ENCODE measurements at regions of chr11 and their contacts with region 1.

Region 1: GRCh38 chr11:68684385-68685356 is at the start of gene GAL:
- DNase-seq: peak; percentile 51 to 77
- H3K4me3 ChIP-seq: peak within 1 kb of the TSS; percentile 62
- H3K4me3 Mint-ChIP-seq: peak within 1 kb of the TSS; percentile 67
- H3K27ac Mint-ChIP-seq: no peak within 1 kb of the TSS
- H3K4me1 ChIP-seq: 0 out of 2 replicates have a peak, but pooled peaks cover 8% of the 10 kb centered on the region
- H3K4me1 Mint-ChIP-seq: peaks cover 7% of the 10 kb centered on the region
- H3K27me3 ChIP-seq: no peaks in the 10 kb centered on the region
- H3K27me3 Mint-ChIP-seq: no peaks in the 10 kb centered on the region
- CTCF ChIP-seq: no peak
- total RNA-seq, gene GAL: 72.6 and 94.4 TPM in 2 replicates

Region 2: GRCh38 chr11:67776852-67777520 is 907.7 kb before region 1 on chr11:
- CTCF ChIA-PET with region 1: no interaction called
- POLR2A ChIA-PET with region 1: no interaction called
- intact Hi-C with region 1: no loop called
- DNase-seq: no peak
- H3K4me3 ChIP-seq: no peak overlapping the region
- H3K4me3 Mint-ChIP-seq: no peak overlapping the region
- H3K27ac Mint-ChIP-seq: peak overlapping the region; percentile 36
- H3K4me1 ChIP-seq: peaks cover 8% of the 10 kb centered on the region
- H3K4me1 Mint-ChIP-seq: peaks cover 28% of the 10 kb centered on the region
- H3K27me3 ChIP-seq: no peaks in the 10 kb centered on the region
- H3K27me3 Mint-ChIP-seq: no peaks in the 10 kb centered on the region
- CTCF ChIP-seq: no peak

Region 3: DNA sequence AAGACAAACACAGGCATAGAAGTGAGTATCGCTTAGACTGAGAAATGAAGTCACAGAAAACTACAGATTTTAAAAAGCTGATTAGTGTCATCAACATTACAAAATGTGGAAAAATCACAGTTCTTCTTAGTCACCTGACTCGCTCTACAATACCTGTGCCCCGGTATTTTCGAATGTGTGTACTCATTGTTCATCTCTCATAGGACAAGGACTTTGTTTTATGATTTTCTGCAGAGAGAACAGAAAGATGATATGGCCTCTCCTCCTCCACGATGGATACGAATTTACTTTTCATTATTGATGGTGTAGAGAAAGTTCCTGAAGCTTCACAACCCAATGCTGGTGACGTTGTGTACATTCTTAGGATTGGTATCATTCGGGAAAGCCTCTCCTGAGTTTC is 29.7 kb before region 1 on chr11:
- CTCF ChIA-PET with region 1: no interaction called
- POLR2A ChIA-PET with region 1: interaction called, 12 read pairs
- intact Hi-C with region 1: no loop called
- DNase-seq: no peak
- H3K4me3 ChIP-seq: no peak overlapping the region
- H3K4me3 Mint-ChIP-seq: no peak overlapping the region
- H3K27ac Mint-ChIP-seq: no peak overlapping the region
- H3K4me1 ChIP-seq: no peaks in the 10 kb centered on the region
- H3K4me1 Mint-ChIP-seq: no peaks in the 10 kb centered on the region
- H3K27me3 ChIP-seq: no peaks in the 10 kb centered on the region; the same call in 1 of the 2 replicates
- H3K27me3 Mint-ChIP-seq: no peaks in the 10 kb centered on the region
- CTCF ChIP-seq: no peak

Region 4: GRCh38 chr11:68724293-68724692 is 39.6 kb after region 1 on chr11:
- CTCF ChIA-PET with region 1: no interaction called
- POLR2A ChIA-PET with region 1: no interaction called
- intact Hi-C with region 1: no loop called
- DNase-seq: no peak
- H3K4me3 ChIP-seq: no peak overlapping the region
- H3K4me3 Mint-ChIP-seq: no peak overlapping the region
- H3K27ac Mint-ChIP-seq: no peak overlapping the region
- H3K4me1 ChIP-seq: no peaks in the 10 kb centered on the region
- H3K4me1 Mint-ChIP-seq: no peaks in the 10 kb centered on the region
- H3K27me3 ChIP-seq: 0 out of 2 replicates have a peak, but pooled peaks cover 1% of the 10 kb centered on the region
- H3K27me3 Mint-ChIP-seq: peaks cover 29% of the 10 kb centered on the region
- CTCF ChIP-seq: no peak

Measured in Caco-2 (cell line).